OCI-LY7 (cell line): ENCODE measurements at regions of chr2 and their contacts with region 1.

Region 1: GRCh38 chr2:100188326-100188725 is 45.9 kb upstream of the AFF3 start:
- DNase-seq: no peak
- H3K4me3 ChIP-seq: no peak overlapping the region
- H3K27ac ChIP-seq: no peak overlapping the region
- H3K4me1 ChIP-seq: no peaks in the 10 kb centered on the region
- CTCF ChIP-seq: no peak

Region 2: DNA sequence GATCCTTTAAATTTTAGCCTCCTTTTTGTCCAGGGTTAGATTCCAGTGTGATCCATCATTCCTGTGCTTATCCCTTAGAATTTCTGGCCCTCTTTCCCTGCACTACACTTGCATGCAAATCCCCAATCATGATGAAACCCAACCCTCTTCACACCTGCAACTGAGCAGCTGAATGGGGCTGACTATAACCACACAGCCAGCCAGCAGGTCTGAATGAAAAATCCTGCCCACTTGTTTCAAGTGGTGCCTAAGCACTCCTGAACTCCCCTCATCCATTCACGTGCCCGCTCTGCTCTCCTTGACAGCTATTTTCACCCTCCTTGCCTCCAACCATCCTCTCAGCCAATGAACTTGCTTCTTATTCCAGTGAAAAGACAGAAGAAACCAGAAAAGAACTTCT is 34.5 kb after region 1 on chr2:
- CTCF ChIA-PET with region 1: no interaction called
- POLR2A ChIA-PET with region 1: no interaction called
- intact Hi-C with region 1: loop called (anchors 5 kb)
- DNase-seq: no peak
- H3K4me3 ChIP-seq: no peak overlapping the region
- H3K27ac ChIP-seq: no peak overlapping the region
- H3K4me1 ChIP-seq: no peaks in the 10 kb centered on the region
- CTCF ChIP-seq: no peak